Activated CD4-positive, alpha-beta memory T cell treated with anti-CD3 and anti-CD28 coated beads, Interleukin-2, amount 10 ng/mL, durations not matched to agents 7 days and 5 days (primary cell): ENCODE measurements at regions of chr3 and their contacts with region 1.

Region 1: GRCh38 chr3:184561061-184561912 is at the start of gene EPHB3:
- DNase-seq: peak; percentile 91
- H3K4me3 Mint-ChIP-seq: peak within 1 kb of the TSS; percentile 8
- H3K27ac Mint-ChIP-seq: no peak within 1 kb of the TSS
- H3K4me1 Mint-ChIP-seq: peaks cover 27% of the 10 kb centered on the region
- H3K27me3 Mint-ChIP-seq: peaks cover 58% of the 10 kb centered on the region
- total RNA-seq, gene EPHB3: 0.20 to 0.71 TPM

Region 2: DNA sequence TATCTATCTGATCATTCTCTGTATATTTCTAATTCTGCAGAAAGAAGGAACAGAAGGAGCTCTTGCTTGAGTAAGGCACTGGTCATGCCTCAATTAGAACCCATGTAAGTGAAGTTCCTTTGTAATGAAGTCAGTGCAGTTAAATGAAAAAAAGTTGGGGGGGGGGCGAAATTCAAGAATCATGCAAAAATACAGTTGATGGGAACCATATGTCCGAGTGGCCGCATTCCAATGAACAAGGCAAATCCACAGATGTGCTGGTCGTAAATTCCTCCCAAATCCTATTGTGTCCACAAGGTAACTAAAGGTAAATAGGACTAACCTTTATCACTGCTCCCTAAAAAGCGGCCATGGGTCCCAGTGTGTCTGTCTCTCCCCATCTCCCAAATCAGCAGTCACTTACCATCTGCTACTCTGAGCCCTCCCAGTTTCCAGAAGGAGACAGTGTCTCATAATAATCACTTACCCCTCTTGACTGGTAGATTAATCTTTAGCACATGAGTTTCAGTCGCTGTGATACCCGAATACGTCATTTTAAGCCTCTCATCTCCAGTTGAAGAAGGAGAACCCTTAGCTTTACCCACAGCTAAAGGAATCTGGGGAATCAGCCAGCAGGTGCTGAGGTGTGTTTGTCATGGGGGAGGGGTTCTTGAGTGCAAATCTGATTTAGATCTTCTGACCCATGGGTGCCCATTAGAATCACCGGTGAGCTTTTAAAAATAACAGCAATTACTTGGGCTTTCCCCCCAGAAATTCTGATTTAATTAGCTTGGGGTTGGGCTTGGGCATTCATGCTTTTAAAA is 56.0 kb before region 1 on chr3:
- CTCF ChIA-PET with region 1: no interaction called
- POLR2A ChIA-PET with region 1: no interaction called
- DNase-seq: no peak
- H3K4me3 Mint-ChIP-seq: no peak overlapping the region
- H3K27ac Mint-ChIP-seq: no peak overlapping the region
- H3K4me1 Mint-ChIP-seq: no peaks in the 10 kb centered on the region
- H3K27me3 Mint-ChIP-seq: peaks cover 38% of the 10 kb centered on the region

Region 3: DNA sequence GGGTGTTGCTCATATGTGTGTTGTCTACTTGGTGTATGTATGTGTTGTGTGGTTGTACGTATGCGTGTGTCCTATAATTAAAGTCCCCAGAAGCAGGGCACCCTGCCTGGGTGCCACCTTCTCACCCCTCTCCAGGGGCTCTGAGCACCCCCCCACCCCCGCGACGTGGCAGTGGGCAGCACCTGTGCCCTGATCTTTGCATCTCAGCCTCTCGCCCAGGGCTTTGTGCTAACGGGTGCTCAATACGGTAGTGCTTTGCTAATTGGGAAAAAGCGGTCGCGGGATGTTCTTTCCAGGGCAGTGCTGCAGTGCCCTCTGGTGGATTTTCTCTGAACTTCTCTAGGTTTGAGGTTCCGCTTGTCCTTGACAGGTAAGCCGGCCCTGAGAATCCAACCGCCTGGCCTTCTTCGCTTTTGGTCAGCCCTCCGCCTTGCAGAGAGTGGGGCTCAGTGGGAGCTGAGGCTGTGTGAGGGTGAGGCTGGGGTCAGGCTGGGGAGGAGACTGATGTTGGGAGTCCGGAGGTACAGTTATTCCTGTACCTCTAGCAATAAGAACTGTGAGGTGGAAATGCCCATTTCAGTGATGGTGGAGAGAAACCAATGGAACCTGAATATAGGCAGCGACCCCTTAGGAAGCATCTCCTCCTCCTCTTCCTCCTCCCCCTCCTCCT is 17.3 kb before region 1 on chr3:
- CTCF ChIA-PET with region 1: interaction called, 18 read pairs
- POLR2A ChIA-PET with region 1: no interaction called
- DNase-seq: peak; percentile 81
- H3K4me3 Mint-ChIP-seq: no peak overlapping the region
- H3K27ac Mint-ChIP-seq: no peak overlapping the region
- H3K4me1 Mint-ChIP-seq: peaks cover 8% of the 10 kb centered on the region
- H3K27me3 Mint-ChIP-seq: peaks cover 22% of the 10 kb centered on the region

Region 4: GRCh38 chr3:184549793-184550577 is 11.3 kb before region 1 on chr3:
- CTCF ChIA-PET with region 1: interaction called, 18 read pairs
- POLR2A ChIA-PET with region 1: interaction called, 3 read pairs
- DNase-seq: no peak
- H3K4me3 Mint-ChIP-seq: no peak overlapping the region
- H3K27ac Mint-ChIP-seq: no peak overlapping the region
- H3K4me1 Mint-ChIP-seq: no peaks in the 10 kb centered on the region
- H3K27me3 Mint-ChIP-seq: peaks cover 6% of the 10 kb centered on the region

Region 5: GRCh38 chr3:184636741-184637316 is 75.5 kb after region 1 on chr3:
- CTCF ChIA-PET with region 1: interaction called, 10 read pairs
- POLR2A ChIA-PET with region 1: interaction called, 3 read pairs
- DNase-seq: peak; percentile 43
- H3K4me3 Mint-ChIP-seq: no peak overlapping the region
- H3K27ac Mint-ChIP-seq: peak overlapping the region; percentile 19
- H3K4me1 Mint-ChIP-seq: peaks cover 4% of the 10 kb centered on the region
- H3K27me3 Mint-ChIP-seq: peaks cover 9% of the 10 kb centered on the region

Region 6: GRCh38 chr3:184733181-184733580 is 171.9 kb after region 1 on chr3:
- CTCF ChIA-PET with region 1: interaction called, 10 read pairs
- POLR2A ChIA-PET with region 1: no interaction called
- DNase-seq: peak; percentile 1
- H3K4me3 Mint-ChIP-seq: no peak overlapping the region
- H3K27ac Mint-ChIP-seq: no peak overlapping the region
- H3K4me1 Mint-ChIP-seq: no peaks in the 10 kb centered on the region
- H3K27me3 Mint-ChIP-seq: peaks cover 5% of the 10 kb centered on the region

Region 7: GRCh38 chr3:184740524-184741484 is 179.5 kb after region 1 on chr3:
- CTCF ChIA-PET with region 1: interaction called, 15 read pairs
- POLR2A ChIA-PET with region 1: interaction called, 3 read pairs
- DNase-seq: no peak
- H3K4me3 Mint-ChIP-seq: no peak overlapping the region
- H3K27ac Mint-ChIP-seq: no peak overlapping the region
- H3K4me1 Mint-ChIP-seq: peaks cover 3% of the 10 kb centered on the region
- H3K27me3 Mint-ChIP-seq: peaks cover 3% of the 10 kb centered on the region